Activated naive CD4-positive, alpha-beta T cell treated with anti-CD3 and anti-CD28 coated beads for 36 hours (primary cell): ENCODE measurements at regions of chrX and their contacts with region 1.

Region 1: DNA sequence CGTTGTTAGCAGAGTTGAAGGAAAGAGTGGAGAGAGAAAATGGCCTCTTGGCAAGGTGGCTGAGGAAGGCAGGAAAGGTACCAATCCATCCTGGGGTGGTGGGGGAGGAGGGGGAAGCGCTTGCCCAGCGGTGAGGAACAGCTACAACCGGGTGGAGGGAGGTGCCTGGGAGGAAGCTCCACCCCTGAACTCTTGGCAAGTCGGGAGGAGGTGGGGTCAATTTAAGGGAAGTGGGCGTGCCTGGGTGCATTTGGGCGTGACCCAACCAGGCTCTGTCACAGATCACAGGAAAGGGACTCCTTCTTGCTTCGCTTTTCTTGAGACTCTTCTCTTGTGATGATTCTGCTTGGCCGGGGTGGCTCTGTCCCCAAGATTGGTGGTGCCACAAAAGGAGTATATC is 41.7 kb downstream of the BCORL1 start:
- DNase-seq: peak; percentile 92
- H3K4me3 Mint-ChIP-seq: peak overlapping the region; percentile 48
- H3K27ac Mint-ChIP-seq: peak overlapping the region; percentile 77
- H3K4me1 Mint-ChIP-seq: peaks cover 12% of the 10 kb centered on the region
- H3K27me3 Mint-ChIP-seq: no peaks in the 10 kb centered on the region

Region 2: GRCh38 chrX:129772796-129773431 is 251.2 kb before region 1 on chrX:
- CTCF ChIA-PET with region 1: no interaction called
- intact Hi-C with region 1: no loop called
- DNase-seq: peak; percentile 68
- H3K4me3 Mint-ChIP-seq: peak overlapping the region; percentile 32
- H3K27ac Mint-ChIP-seq: peak overlapping the region; percentile 91
- H3K4me1 Mint-ChIP-seq: peaks cover 67% of the 10 kb centered on the region
- H3K27me3 Mint-ChIP-seq: no peaks in the 10 kb centered on the region

Region 3: GRCh38 chrX:129925305-129926092 is 98.6 kb before region 1 on chrX:
- CTCF ChIA-PET with region 1: interaction called, 56 read pairs
- intact Hi-C with region 1: loop called (anchors 1 kb)
- DNase-seq: peak; percentile 81
- H3K4me3 Mint-ChIP-seq: no peak overlapping the region
- H3K27ac Mint-ChIP-seq: no peak overlapping the region
- H3K4me1 Mint-ChIP-seq: peaks cover 3% of the 10 kb centered on the region
- H3K27me3 Mint-ChIP-seq: no peaks in the 10 kb centered on the region

Region 4: DNA sequence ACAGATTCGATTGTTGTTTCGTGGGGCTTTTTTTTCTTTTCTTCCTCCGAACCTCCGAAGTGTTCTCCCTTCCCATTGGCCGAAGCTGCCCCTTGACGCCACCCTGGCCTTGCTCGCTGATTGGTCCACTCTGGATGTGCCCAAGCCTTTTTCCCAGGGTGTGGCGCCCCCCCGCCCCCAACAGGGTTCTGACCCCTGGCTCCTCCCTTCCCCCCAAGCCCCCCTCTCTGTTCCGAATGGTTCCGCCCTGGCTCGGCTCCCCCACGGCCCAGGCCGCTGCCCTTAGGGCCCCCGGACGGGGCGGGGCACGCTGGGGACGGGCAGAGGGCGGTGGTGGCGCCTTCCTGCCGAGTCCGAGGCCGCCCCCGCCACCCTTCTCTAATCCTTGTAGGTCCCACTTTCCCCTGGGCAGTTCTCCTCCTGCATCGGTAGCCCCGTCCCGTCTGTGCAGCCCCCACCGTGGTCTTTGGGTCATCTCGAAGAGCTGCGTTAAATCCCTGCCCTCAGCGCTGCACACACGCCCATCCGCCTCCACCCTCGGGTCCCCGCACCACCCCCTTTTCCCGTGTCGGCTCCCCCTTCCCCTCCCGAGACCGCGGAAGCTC is 92.6 kb before region 1 on chrX:
- CTCF ChIA-PET with region 1: interaction called, 56 read pairs
- intact Hi-C with region 1: loop called (anchors 1 kb)
- DNase-seq: peak; percentile 43
- H3K4me3 Mint-ChIP-seq: peak overlapping the region; percentile 65
- H3K27ac Mint-ChIP-seq: no peak overlapping the region
- H3K4me1 Mint-ChIP-seq: peaks cover 5% of the 10 kb centered on the region
- H3K27me3 Mint-ChIP-seq: peaks cover 4% of the 10 kb centered on the region

Region 5: GRCh38 chrX:129961180-129962083 is 62.7 kb before region 1 on chrX:
- CTCF ChIA-PET with region 1: interaction called, 5 read pairs
- intact Hi-C with region 1: loop called (anchors 1 kb)
- DNase-seq: peak; percentile 84
- H3K4me3 Mint-ChIP-seq: peak overlapping the region; percentile 76
- H3K27ac Mint-ChIP-seq: peak overlapping the region; percentile 86
- H3K4me1 Mint-ChIP-seq: peaks cover 11% of the 10 kb centered on the region
- H3K27me3 Mint-ChIP-seq: no peaks in the 10 kb centered on the region

Region 6: DNA sequence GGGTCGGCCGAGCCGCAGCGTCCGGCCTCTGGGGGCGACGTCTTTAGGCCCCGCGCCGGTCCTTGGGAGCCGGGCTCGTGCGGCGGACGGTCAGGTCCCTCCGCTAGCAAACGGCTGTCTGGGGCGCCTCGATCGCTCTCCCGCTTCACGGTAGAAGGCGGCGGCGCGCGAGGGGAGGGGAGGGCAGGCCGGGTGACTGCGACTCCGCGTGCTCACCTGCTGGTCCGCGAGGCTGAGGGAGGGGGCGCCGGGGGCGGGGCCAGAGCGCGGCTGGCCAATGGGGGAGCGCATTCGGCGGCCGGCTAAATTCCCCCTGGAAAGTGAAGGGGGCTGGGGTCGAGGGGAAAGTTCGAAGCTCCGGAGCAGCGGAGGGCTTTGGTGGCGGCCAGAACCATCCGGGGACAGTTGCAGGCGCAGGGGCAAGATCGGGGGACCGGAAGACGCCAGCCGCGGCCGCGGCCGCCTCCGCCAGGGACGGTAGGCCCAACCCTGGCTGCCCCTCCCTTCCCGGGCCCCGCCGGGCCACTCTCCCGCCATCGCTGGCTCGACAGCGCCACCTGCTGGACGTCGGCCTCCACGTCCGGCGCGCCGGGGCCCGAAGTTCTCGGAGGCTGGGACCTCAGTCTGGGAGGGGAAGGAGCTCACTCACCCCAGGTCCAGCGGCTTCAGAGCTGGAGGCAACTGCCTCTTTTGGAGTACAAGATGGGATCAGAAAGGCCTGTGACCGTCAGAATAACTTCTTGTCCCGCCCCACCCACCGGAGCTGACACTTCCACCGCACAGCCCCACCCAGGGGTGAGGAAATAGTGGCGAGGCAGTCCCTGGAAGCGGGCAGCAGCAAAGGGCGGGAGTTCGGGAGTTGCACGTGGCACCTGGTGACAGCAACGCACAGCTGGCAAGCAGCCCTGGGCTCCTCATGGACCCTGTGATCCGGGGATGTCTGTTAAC is 36.3 kb after region 1 on chrX:
- CTCF ChIA-PET with region 1: interaction called, 4 read pairs
- intact Hi-C with region 1: loop called (anchors 2 kb)
- DNase-seq: peak; percentile 83
- H3K4me3 Mint-ChIP-seq: peak overlapping the region; percentile 71
- H3K27ac Mint-ChIP-seq: no peak overlapping the region
- H3K4me1 Mint-ChIP-seq: no peaks in the 10 kb centered on the region
- H3K27me3 Mint-ChIP-seq: no peaks in the 10 kb centered on the region

Region 7: GRCh38 chrX:130944230-130944629 is 920.1 kb after region 1 on chrX:
- CTCF ChIA-PET with region 1: no interaction called
- intact Hi-C with region 1: no loop called
- DNase-seq: no peak
- H3K4me3 Mint-ChIP-seq: no peak overlapping the region
- H3K27ac Mint-ChIP-seq: no peak overlapping the region
- H3K4me1 Mint-ChIP-seq: no peaks in the 10 kb centered on the region
- H3K27me3 Mint-ChIP-seq: peaks cover 3% of the 10 kb centered on the region